ENCODE measurements at regions of chr15 and their contacts with region 1.

Region 1: DNA sequence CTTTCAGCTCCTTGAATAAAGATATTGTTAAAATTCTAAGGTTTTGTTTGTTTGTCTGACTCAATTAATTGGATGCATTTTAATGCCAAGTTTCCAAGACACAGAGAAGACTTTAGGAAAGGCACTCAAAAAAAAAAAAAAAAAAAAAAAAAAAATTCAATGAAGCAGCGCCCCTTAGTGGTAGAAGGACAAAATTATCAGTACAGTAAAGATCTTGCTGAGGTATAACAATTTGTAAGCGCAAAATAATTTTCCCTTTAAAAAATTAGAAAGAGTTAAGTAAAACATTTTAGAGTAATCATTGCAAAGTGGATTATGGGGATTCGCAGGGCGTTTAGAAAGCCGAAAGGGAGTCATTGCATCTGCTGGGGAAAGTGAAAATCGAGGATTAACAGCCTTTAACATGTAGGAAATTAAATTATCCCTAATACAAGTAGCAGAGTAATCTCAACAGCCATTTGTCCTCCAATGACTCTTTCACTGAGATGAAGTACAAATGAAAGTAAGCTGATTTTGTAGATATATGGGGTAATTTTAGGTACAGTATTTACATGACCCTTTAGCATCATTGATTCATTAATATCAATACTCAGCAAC is 5.8 kb upstream of the DIS3L start:
- DNase-seq: no peak
- H3K4me3 ChIP-seq: no peak overlapping the region
- H3K27ac ChIP-seq: no peak overlapping the region
- H3K4me1 ChIP-seq: peaks cover 5 to 36% (median 19%) of the 10 kb centered on the region in 4 donors
- H3K27me3 ChIP-seq: no peaks in the 10 kb centered on the region
- CTCF ChIP-seq: peak; percentile 42 to 62 (median 44)
- EP300 ChIP-seq: no peak
- POLR2A ChIP-seq: no peak

Region 2: DNA sequence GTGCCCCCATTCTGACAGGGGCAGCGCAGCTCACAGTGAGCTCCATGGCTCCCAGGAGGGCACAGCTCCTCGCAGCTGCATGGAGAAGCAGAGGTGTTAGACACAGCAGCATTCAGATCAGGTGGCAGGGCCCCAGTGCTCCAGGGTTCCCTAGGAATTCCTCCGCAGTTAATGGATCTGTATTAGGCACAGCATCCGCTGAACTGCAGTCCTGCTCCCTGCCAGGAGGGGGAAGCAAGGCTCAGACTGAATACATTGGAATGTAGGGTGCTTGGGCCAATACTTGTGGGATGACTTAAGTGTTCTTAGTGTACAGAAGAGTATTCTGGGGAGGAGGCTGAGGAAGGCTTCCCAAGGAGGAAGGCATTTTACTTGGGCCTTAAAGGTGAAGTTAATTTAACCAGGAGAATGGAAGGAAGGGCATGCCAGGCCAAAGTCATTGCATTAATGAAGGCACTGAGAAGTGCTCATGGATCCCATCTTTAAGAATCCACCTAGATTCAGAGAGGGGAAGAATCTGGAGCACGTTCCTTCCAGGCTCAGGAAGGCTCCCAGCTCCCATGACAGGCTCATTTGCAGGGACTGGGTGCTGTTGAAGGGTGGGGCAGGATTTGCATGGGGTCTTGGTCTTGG is 306.6 kb before region 1 on chr15:
- intact Hi-C with region 1: loop called (anchors 5 kb)
- DNase-seq: no peak
- H3K4me3 ChIP-seq: no peak overlapping the region
- H3K27ac ChIP-seq: no peak overlapping the region
- H3K4me1 ChIP-seq: peaks cover 0 to 16% (median 9%) of the 10 kb centered on the region in 4 donors
- H3K27me3 ChIP-seq: peaks cover 0 to 57% (median 16%) of the 10 kb centered on the region in 4 donors
- CTCF ChIP-seq: peak; percentile 67 to 75 (median 75)
- EP300 ChIP-seq: no peak
- POLR2A ChIP-seq: no peak

Region 3: DNA sequence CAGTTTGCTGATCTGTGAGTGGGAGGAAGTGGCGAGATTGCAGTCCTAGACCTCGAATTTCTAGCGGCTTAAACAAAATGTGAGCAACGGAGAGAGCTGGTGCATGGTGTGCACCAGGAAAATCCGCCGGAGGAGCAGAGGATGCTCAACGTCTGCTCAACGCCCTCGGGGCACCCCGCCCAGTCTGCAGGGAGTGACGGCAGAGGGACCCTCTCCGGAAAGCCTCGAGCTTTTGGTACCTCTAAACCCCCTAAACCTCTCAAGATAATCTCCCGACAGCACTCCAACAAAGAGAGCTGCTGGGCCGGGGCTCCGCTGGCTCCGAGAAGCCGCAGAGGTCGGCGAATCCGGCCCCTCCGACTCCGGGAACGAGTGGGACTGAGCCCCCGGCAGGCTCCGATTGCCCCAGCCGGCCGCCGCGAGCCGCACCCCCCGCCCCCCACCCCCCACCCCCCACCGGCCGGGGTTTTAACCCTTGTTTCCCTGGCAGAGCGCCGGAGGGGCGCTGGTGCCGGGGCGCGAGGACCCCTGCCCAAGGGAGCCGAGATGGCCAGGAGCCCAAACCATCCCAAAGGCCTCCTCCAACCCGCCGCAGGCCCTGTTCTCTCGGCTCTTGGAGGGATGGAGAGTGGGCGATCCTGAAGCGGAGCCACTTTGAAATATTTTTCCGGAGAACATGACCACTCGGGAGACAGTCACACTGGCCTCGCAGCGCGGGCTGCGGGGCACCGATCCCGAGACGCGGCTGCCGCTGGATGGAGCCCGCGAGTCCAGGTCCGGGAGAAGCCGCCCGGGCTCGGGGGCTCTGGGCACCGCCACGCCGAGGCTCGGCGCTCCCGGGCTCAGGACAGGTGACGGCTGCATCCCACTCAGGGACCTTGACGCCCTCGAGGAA is 35.5 kb before region 1 on chr15:
- intact Hi-C with region 1: loop called (anchors 5 kb)
- DNase-seq: no peak
- H3K4me3 ChIP-seq: peak overlapping the region; percentile 57 to 67 (median 64)
- H3K27ac ChIP-seq: no peak overlapping the region
- H3K4me1 ChIP-seq: peaks cover 27 to 35% (median 33%) of the 10 kb centered on the region in 4 donors
- H3K27me3 ChIP-seq: peaks cover 0 to 79% (median 38%) of the 10 kb centered on the region in 4 donors
- CTCF ChIP-seq: peak; percentile 38 to 80 (median 47)
- EP300 ChIP-seq: no peak
- POLR2A ChIP-seq: no peak